Activated CD8-positive, alpha-beta T cell treated with anti-CD3 and anti-CD28 coated beads for 36 hours (primary cell): ENCODE measurements at regions of chr10 and their contacts with region 1.

Region 1: GRCh38 chr10:24518981-24519597 is 204.6 kb downstream of the ARHGAP21 start:
- DNase-seq: peak; percentile 59
- ATAC-seq: no peak
- H3K4me3 Mint-ChIP-seq: peak overlapping the region; percentile 59
- H3K27ac Mint-ChIP-seq: no peak overlapping the region
- H3K4me1 Mint-ChIP-seq: peaks cover 12% of the 10 kb centered on the region
- H3K27me3 Mint-ChIP-seq: peaks cover 5% of the 10 kb centered on the region
- CTCF ChIP-seq: peak; percentile 92

Region 2: GRCh38 chr10:23994479-23995046 is 524.5 kb before region 1 on chr10:
- CTCF ChIA-PET with region 1: interaction called, 9 read pairs
- POLR2A ChIA-PET with region 1: no interaction called
- intact Hi-C with region 1: loop called (anchors 5 kb)
- DNase-seq: peak; percentile 62
- ATAC-seq: no peak
- H3K4me3 Mint-ChIP-seq: no peak overlapping the region
- H3K27ac Mint-ChIP-seq: no peak overlapping the region
- H3K4me1 Mint-ChIP-seq: no peaks in the 10 kb centered on the region
- H3K27me3 Mint-ChIP-seq: peaks cover 6% of the 10 kb centered on the region
- CTCF ChIP-seq: peak; percentile 70

Region 3: GRCh38 chr10:24475617-24476016 is 43.5 kb before region 1 on chr10:
- CTCF ChIA-PET with region 1: no interaction called
- POLR2A ChIA-PET with region 1: no interaction called
- intact Hi-C with region 1: no loop called
- DNase-seq: no peak
- ATAC-seq: no peak
- H3K4me3 Mint-ChIP-seq: no peak overlapping the region
- H3K27ac Mint-ChIP-seq: no peak overlapping the region
- H3K4me1 Mint-ChIP-seq: no peaks in the 10 kb centered on the region
- H3K27me3 Mint-ChIP-seq: peaks cover 20% of the 10 kb centered on the region
- CTCF ChIP-seq: no peak

Region 4: DNA sequence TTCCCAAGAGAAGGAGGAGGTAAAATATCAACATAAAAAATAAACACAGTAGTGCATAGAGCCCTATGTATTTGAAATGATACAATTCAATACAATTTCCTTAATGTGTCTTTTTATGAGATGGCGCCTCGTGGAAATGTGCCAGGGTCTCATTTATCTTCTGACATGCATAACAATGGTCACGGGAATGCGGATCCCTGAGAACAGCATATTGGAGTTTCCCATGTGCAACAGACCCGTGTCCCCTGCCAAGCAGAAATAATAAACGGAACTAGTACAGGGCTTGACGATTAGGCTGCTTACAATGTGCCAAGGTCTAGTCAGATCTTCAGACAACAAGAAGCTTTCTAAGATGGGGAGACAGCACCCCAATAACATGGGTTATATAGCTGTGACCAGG is 13.3 kb before region 1 on chr10:
- CTCF ChIA-PET with region 1: interaction called, 27 read pairs
- POLR2A ChIA-PET with region 1: no interaction called
- intact Hi-C with region 1: no loop called
- DNase-seq: no peak
- ATAC-seq: no peak
- H3K4me3 Mint-ChIP-seq: no peak overlapping the region
- H3K27ac Mint-ChIP-seq: no peak overlapping the region
- H3K4me1 Mint-ChIP-seq: no peaks in the 10 kb centered on the region
- H3K27me3 Mint-ChIP-seq: peaks cover 10% of the 10 kb centered on the region
- CTCF ChIP-seq: no peak

Region 5: DNA sequence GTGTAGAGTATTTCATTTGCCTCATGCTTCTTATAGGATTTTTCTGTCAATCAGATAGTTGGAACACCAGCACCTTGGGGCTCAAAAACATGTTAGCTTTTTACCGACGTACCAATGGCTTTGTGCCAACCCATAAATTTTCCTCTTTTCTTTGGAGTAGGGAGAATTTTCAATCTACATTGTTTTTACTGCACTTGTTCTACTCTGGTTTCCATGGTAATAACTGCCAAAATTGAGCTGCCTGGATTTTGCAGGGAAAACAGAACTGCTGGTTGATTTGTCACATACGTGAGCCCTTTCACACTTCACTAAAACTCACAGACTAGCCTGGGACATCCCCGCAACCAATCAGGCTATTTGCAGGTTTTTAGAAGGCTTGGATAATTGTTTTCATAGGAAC is 14.9 kb after region 1 on chr10:
- CTCF ChIA-PET with region 1: interaction called, 11 read pairs
- POLR2A ChIA-PET with region 1: no interaction called
- intact Hi-C with region 1: no loop called
- DNase-seq: no peak
- ATAC-seq: no peak
- H3K4me3 Mint-ChIP-seq: no peak overlapping the region
- H3K27ac Mint-ChIP-seq: no peak overlapping the region
- H3K4me1 Mint-ChIP-seq: no peaks in the 10 kb centered on the region
- H3K27me3 Mint-ChIP-seq: no peaks in the 10 kb centered on the region
- CTCF ChIP-seq: no peak